CD4-positive, alpha-beta memory T cell (primary cell): ENCODE measurements at regions of chr3 and their contacts with region 1.

Region 1: DNA sequence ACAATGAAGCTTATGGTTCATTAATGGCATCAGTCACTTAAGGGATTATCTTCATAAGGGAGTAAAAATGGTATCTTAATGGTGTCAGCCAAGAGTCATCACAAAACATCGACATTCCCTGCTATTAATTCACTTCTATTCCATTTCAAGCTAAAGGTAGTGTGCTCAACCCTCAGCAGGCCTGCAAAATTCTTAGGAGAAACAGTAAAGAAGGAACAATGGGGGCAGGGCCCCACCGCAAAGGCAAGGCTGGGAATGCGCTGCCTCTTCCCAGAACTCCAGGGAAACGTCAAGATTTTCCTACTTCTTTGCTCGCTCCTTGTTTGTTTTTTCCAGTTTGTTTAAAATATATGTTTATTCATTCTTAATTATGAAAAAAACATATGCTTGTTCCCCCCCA is 187.3 kb upstream of the TSC22D2 start:
- DNase-seq: no peak
- H3K4me3 ChIP-seq: no peak overlapping the region
- H3K4me3 Mint-ChIP-seq: no peak overlapping the region
- H3K27ac ChIP-seq: no peak overlapping the region
- H3K27ac Mint-ChIP-seq: no peak overlapping the region
- H3K4me1 ChIP-seq: peaks cover 5% of the 10 kb centered on the region
- H3K4me1 Mint-ChIP-seq: peaks cover 0 to 4% (median 2%) of the 10 kb centered on the region in 4 donors
- H3K27me3 ChIP-seq: peaks cover 9% of the 10 kb centered on the region
- H3K27me3 Mint-ChIP-seq: peaks cover 25 to 49% of the 10 kb centered on the region in 2 donors

Region 2: DNA sequence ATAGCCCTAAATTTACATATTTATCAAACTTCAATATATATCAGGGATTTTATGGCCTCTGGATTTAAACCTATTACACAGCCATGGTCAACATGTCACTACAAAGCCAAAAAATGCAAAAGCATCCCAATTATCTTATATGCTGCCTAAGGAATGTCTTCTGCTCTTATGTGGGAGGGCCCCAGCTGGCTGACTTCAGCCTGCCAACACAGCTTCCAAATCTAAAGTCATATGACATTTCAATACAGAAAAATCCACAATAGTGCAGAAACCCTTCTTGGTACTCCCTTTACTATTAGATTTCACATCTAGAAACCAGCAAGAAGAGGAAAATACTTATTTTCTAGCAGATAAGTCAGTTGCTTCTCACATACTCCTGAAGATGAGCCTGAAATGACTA is 256.5 kb before region 1 on chr3:
- CTCF ChIA-PET with region 1: interaction called, 33 read pairs
- POLR2A ChIA-PET with region 1: no interaction called
- intact Hi-C with region 1: loop called (anchors 1 kb)
- DNase-seq: no peak
- H3K4me3 ChIP-seq: no peak overlapping the region
- H3K4me3 Mint-ChIP-seq: no peak overlapping the region
- H3K27ac ChIP-seq: no peak overlapping the region
- H3K27ac Mint-ChIP-seq: no peak overlapping the region
- H3K4me1 ChIP-seq: peaks cover 1% of the 10 kb centered on the region
- H3K4me1 Mint-ChIP-seq: peaks cover 5 to 7% (median 6%) of the 10 kb centered on the region in 4 donors
- H3K27me3 ChIP-seq: no peaks in the 10 kb centered on the region
- H3K27me3 Mint-ChIP-seq: no peaks in the 10 kb centered on the region